Pancreas (tissue), 10 donors: ENCODE measurements at regions of chr11 and their contacts with region 1.

Region 1: GRCh38 chr11:6353367-6353987 is 33.2 kb upstream of the CAVIN3 start:
- DNase-seq: peak; percentile 59 to 78 (median 70)
- ATAC-seq: peak; percentile 72 to 92 (median 88)
- H3K4me3 ChIP-seq: no peak overlapping the region
- H3K27ac ChIP-seq: peak overlapping the region in 1 of 4 donors; percentile 77
- H3K4me1 ChIP-seq: peaks cover 6 to 29% (median 19%) of the 10 kb centered on the region in 3 donors
- H3K27me3 ChIP-seq: no peaks in the 10 kb centered on the region
- CTCF ChIP-seq: peak; percentile 89 to 97 (median 96)

Region 2: GRCh38 chr11:5992604-5993251 is 360.7 kb before region 1 on chr11:
- intact Hi-C with region 1: loop called in 1 of 3 experiments (anchors 10 kb)
- DNase-seq: no peak
- ATAC-seq: peak; percentile 40 to 69 (median 66)
- H3K4me3 ChIP-seq: no peak overlapping the region
- H3K27ac ChIP-seq: no peak overlapping the region
- H3K4me1 ChIP-seq: no peaks in the 10 kb centered on the region
- H3K27me3 ChIP-seq: no peaks in the 10 kb centered on the region
- CTCF ChIP-seq: peak; percentile 32 to 54 (median 42)

Region 3: DNA sequence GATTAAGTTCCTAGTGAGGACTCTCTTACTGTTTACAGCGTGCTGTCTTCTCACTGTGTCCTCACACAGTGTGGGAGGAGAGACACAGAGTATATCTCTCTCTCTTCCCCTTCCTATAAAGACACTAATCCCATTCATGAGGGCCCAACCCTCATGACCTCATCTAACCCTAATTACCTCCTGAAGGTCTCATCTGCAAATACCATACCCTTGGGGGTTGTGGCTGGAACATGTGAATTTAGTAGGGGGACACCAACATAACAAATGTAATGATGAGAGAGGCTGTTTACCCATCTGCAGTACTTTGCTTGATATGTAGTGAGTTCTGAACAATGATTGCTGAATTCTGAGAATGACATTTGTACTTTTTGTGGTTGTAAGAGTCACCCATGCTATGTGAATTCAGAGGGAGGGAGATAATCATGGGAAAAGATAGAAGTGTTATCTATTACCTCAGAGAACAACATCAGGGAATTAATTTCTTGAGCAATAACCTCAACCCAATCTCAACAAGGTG is 159.4 kb before region 1 on chr11:
- intact Hi-C with region 1: no loop called
- DNase-seq: no peak
- ATAC-seq: no peak
- H3K4me3 ChIP-seq: no peak overlapping the region
- H3K27ac ChIP-seq: no peak overlapping the region
- H3K4me1 ChIP-seq: no peaks in the 10 kb centered on the region
- H3K27me3 ChIP-seq: no peaks in the 10 kb centered on the region
- CTCF ChIP-seq: no peak

Region 4: DNA sequence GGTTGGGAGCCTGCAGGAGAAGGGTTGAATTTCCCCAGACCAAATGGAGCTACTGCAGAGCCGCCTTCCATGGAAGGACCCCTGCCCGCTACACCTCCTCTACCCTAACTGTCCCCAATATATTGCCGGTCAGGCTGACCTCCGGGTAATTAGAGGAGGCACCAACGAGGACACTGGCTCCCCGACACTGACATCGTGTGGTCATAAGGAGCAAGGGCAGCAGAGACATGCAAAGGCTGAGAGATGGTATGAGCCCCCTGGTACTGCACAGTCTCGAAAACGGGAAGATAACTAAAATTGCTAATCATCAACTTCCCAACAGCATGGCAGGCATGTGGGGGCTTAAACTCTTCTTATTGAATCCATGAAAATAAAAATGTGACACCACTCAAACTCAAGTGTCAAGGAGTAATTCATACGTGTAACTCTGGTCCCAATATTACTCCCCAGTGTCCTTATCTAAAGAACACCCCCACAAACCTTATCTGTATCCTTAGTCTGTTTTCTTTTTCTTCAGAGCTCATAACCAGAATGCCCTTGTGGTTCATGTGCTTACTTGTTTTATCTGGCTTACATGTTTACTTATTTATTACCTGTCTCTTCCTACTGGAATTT is 37.6 kb before region 1 on chr11:
- intact Hi-C with region 1: no loop called
- DNase-seq: peak; percentile 39 to 76 (median 56)
- ATAC-seq: peak in 3 of 4 donors; percentile 48 to 57 (median 56)
- H3K4me3 ChIP-seq: peak overlapping the region in 1 of 4 donors; percentile 2
- H3K27ac ChIP-seq: no peak overlapping the region
- H3K4me1 ChIP-seq: peaks cover 3 to 15% (median 6%) of the 10 kb centered on the region in 3 donors
- H3K27me3 ChIP-seq: no peaks in the 10 kb centered on the region
- CTCF ChIP-seq: peak; percentile 62 to 82 (median 76)

Region 5: DNA sequence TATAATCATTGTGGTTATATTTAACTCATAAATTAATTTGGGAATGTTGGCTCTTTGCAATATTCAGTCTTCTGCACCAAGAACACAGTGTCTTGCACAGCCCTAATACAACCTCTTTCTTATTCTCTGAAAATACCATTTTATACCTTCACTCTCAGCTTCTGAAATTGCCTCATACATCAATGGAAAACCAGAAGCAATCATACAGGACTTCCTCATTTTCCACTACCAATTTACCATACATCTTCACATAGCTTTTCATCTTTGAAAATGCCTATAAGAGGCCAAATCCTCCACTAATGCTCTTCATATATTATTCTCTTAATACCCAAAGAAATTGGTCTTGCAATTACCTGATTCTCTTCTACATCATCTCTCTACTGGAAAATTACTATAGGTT is 425.0 kb after region 1 on chr11:
- intact Hi-C with region 1: no loop called
- DNase-seq: no peak
- ATAC-seq: no peak
- H3K4me3 ChIP-seq: no peak overlapping the region
- H3K27ac ChIP-seq: no peak overlapping the region
- H3K4me1 ChIP-seq: no peaks in the 10 kb centered on the region
- H3K27me3 ChIP-seq: no peaks in the 10 kb centered on the region
- CTCF ChIP-seq: no peak